ENCODE measurements at regions of chr12 and their contacts with region 1.

Region 1: DNA sequence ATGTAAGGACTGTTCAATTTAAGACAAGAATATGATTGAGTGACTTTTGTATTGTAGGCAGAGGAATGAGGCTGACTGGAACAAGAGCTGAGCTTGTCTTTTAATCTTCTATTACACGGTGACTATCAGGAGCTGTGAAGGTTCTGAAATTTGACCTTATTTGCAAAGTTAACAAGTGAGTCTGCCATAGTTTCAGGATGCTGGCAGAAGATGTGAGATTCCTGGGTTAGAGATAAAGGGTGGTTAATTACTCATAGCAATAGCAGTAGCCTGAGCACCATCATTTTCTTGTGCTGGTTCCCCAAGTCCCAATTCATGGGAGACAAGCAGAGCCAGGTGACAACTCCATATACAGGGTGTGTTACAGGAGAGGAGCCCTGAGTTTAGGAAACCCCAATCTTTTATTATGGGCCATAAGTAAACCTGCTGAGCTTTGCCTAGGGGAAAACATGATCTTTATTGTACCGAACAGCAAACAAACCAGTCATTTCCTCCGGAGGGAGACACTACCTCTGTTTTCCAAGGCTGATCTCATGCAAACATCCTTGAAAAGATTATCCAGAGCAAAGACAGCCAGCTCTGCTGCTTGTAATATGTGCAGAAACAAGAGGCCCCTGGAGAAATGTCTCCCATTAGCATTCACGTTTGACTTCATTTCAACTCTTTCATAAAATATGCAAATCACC is 51.7 kb upstream of the DDX11 start:
- DNase-seq: no peak
- H3K4me3 ChIP-seq: no peak overlapping the region
- H3K27ac ChIP-seq: no peak overlapping the region
- H3K4me1 ChIP-seq: no peaks in the 10 kb centered on the region
- H3K27me3 ChIP-seq: no peaks in the 10 kb centered on the region
- CTCF ChIP-seq: peak; percentile 13; the same call in 1 of the 2 replicates
- EP300 ChIP-seq: no peak
- RAD21 ChIP-seq: no peak; the same call in 1 of the 2 replicates

Region 2: GRCh38 chr12:31005944-31006361 is 16.0 kb before region 1 on chr12:
- CTCF ChIA-PET with region 1: no interaction called
- POLR2A ChIA-PET with region 1: no interaction called
- DNase-seq: peak; percentile 6
- H3K4me3 ChIP-seq: no peak overlapping the region
- H3K27ac ChIP-seq: no peak overlapping the region
- H3K4me1 ChIP-seq: peaks cover 3 to 9% of the 10 kb centered on the region in 2 experiments; a peak in 2 of 4 replicates
- H3K27me3 ChIP-seq: no peaks in the 10 kb centered on the region
- CTCF ChIP-seq: no peak
- EP300 ChIP-seq: no peak
- RAD21 ChIP-seq: no peak

Region 3: DNA sequence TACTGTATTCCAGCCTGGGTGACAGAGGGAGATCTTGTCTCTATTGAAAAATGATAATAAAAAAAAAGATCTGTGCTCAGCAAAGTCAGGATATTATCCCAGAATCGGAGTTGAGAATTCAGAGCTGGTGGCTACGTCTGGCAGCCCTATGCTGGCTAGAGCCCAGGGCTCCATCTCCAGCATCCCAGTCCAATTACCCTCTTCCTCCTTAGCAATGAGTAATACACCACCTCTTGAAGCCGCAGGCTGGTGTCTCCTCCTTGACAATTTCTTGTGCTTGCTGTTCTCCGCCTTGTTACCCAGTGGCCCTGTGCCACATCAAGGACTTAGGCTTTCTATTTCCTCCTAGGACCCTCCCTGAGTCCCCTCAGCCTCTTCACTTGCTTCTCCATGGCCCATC is 13.3 kb after region 1 on chr12:
- CTCF ChIA-PET with region 1: interaction called, 15 read pairs
- POLR2A ChIA-PET with region 1: no interaction called
- DNase-seq: no peak
- H3K4me3 ChIP-seq: no peak overlapping the region
- H3K27ac ChIP-seq: no peak overlapping the region
- H3K4me1 ChIP-seq: no peaks in the 10 kb centered on the region
- H3K27me3 ChIP-seq: no peaks in the 10 kb centered on the region
- CTCF ChIP-seq: no peak
- EP300 ChIP-seq: no peak
- RAD21 ChIP-seq: no peak